ENCODE measurements at regions of chr12 and their contacts with region 1.

Region 1: DNA sequence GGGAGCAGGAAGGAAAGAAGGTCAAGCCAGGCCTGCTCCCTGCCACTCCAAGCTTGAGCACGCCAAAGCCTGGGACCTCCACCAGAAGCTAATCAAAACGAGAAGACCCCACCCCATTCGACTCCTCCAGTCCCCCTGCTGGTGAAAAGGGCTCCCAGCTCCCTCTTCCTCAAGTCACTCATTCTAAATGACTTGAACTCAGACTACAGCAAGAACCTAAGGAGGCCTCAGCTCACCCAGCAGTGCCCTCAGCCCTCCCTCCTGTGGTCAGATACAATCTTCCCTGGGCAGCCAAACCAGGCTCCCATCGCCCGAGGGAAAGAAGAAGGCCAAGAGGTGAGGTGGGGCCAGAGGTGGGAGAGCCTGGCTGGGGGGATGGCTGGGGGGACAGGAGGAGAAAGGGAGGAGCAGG is 17.4 kb downstream of the HDAC7 start:
- DNase-seq: no peak
- H3K4me3 Mint-ChIP-seq: peak overlapping the region; percentile 78
- H3K27ac Mint-ChIP-seq: peak overlapping the region; percentile 98
- H3K4me1 Mint-ChIP-seq: peaks cover 79% of the 10 kb centered on the region
- H3K27me3 Mint-ChIP-seq: no peaks in the 10 kb centered on the region

Region 2: DNA sequence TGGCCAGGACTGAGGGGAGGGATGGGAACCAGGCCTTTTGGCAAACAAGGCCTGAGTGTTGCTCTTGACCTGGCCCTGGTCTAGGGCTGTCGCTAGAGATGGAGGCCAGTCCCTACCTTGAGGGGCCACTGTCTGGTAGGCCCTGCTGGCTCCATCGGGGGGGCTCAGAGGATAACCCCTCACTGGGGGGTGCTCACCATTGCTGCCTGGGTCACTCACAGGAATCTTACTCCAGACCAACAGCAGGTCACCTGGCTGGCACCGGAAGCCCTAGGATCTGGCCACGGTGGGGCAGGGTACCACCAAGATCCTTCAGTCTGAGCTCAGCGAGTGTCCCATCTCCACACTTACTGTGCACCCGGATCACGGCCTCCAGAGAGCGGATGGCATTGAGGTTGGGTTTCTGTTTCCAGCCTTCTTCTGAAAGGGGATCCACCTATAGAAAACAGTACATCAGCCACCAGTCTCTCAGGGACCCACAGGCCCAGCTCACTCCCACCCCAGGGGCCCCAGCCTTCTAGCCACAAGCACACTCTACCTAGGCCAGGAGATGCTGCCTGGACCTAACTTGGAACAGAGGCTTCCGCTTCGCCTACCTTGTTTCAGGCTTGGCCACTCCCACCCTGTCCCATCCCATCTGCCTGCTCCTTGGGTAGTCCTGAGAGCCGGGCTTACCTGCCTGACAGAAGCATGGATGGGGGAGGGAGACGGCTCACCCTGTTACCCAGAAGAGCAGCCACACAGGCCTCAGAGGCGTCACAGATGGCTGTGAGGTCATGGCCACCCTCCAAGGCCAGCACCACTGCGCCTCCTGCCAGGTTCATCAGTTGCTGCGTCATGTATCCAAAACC is 17.1 kb before region 1 on chr12:
- intact Hi-C with region 1: loop called (anchors 2 kb)
- DNase-seq: no peak
- H3K4me3 Mint-ChIP-seq: no peak overlapping the region
- H3K27ac Mint-ChIP-seq: peak overlapping the region; percentile 66
- H3K4me1 Mint-ChIP-seq: peaks cover 13% of the 10 kb centered on the region
- H3K27me3 Mint-ChIP-seq: no peaks in the 10 kb centered on the region

Region 3: DNA sequence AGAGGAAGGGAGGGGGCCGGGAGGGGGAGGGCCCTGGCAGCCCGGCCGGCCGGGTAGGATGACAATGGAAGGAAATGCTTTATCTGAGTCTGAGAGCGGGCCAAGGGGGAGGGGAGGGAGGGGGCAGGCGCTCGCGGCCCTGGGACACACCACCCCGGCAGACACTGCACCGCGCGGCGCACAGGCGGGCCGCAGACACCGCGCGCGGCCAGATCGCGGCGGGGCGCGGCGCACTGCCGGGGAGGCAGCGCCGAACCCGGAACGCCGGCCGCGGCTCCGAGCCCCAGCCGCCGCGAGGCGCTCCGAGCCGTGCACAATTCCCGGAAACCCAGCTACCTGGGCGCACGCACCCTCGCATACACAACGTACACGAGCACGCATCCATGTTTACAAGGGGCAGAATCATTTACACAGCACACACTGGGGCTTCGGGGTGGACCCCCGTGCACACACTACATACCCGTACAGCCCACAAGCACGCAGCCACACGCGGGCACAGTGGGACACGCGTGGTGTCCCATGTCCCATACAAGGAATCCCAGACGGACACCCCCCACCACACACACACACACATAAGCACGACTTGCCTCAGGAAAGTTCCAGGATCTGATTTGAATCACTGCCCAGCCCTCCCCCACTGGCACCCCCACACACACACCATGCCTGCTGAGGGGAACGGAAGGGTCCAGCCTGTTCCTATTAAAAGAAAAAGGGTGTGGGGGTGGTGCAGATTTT is 17.7 kb after region 1 on chr12 and contains the start of gene HDAC7:
- intact Hi-C with region 1: loop called (anchors 2 kb)
- DNase-seq: peak; percentile 54
- H3K4me3 Mint-ChIP-seq: peak within 1 kb of the TSS; percentile 96
- H3K27ac Mint-ChIP-seq: peak within 1 kb of the TSS; percentile 98
- H3K4me1 Mint-ChIP-seq: peaks cover 78% of the 10 kb centered on the region
- H3K27me3 Mint-ChIP-seq: peaks cover 1% of the 10 kb centered on the region
- total RNA-seq, gene HDAC7: 453 and 466 TPM in 2 replicates

Region 4: DNA sequence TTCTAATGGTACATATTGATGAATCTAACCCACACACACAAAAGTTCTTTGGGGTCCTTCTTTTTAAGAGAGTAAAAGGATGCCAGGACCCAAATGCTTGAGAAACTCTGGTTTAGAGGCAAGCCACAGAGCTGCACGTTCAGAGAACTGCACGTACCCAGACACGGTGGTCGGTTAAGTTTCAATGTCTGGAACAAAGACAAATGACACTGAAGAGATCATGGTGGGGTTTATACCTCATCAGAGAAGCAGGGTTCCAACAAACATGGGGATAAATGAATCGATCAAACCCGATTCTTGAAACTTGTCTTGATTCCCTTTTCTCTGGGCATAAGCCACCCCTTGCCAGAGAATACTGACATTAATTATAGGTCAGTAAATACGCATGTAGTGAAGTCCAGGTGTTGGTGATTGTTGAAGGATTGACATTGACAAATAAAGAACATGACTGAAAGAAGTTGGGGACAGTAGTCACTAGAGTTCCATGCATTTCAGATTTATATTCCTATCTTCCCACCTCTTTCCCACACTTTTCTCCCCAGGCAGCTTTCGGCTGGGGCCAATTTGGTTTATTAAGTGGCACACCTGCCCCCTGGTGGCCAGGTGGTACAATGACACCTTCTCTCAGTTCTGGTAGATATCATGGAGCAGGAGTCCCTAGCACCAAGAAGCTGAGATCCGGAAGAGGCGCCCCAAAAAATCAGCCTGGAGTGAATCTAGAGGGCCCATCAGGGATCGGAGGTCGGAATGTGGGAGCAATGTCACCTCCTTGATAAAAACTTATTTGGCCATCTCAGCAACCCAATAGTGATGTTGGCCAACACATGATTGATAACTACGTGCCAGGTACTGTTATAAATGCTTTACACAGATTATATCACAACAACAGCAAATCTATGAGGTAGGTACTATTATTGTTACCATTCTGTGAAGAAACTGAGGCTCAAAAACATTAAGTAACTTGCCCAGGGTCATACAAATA is 35.2 kb after region 1 on chr12:
- intact Hi-C with region 1: loop called (anchors 1 kb)
- DNase-seq: peak; percentile 41
- H3K4me3 Mint-ChIP-seq: no peak overlapping the region
- H3K27ac Mint-ChIP-seq: peak overlapping the region; percentile 67
- H3K4me1 Mint-ChIP-seq: peaks cover 84% of the 10 kb centered on the region
- H3K27me3 Mint-ChIP-seq: no peaks in the 10 kb centered on the region

Region 5: DNA sequence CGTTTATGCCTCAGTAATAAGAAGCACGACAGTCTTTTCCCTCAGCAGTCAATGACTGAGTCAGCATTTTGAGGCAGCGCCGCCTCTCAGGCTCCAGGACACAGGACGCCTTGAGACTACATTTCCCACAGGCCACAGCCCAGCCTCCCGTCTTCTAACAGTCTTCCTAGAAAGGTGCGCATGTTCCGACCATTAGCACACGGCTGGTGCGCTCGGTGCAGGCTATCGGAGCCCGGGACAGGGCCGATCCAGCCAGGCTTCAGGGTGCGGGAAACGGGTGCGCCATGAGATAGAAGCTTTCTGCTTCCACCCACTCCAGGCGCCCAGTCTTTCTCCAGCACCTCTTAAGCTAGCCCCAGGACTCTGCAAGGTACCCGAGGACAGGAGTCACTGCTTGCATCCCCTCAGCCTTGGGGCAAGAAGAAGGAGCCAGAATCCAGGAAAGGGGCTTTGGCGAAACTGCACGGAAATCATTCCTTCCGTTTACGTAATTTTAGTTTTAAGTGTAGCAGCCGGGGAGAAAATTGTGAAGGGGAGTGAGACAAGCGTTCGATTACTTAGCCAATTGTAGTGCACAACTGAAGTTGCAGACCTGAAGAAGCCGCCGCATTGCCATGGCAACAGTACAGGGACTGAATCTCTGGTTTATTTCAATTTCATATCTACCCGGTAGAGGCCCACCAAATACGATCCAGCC is 494.4 kb after region 1 on chr12:
- intact Hi-C with region 1: no loop called
- DNase-seq: peak; percentile 11
- H3K4me3 Mint-ChIP-seq: peak overlapping the region; percentile 66
- H3K27ac Mint-ChIP-seq: no peak overlapping the region
- H3K4me1 Mint-ChIP-seq: peaks cover 10% of the 10 kb centered on the region
- H3K27me3 Mint-ChIP-seq: peaks cover 9% of the 10 kb centered on the region

Measured in activated T-helper 1 cell treated with anti-CD3 and anti-CD28 coated beads, Interleukin-12 subunit alpha, Interleukin-12 subunit beta, Interleukin-2, Interleukin-4 antibody, amounts not matched to agents 30 ng/mL and 10 ng/mL and 1 ng/mL, durations not matched to agents 14 hours and 24 hours and 36 hours (primary cell).